ENCODE measurements at regions of chr10 and their contacts with region 1.

Region 1: GRCh38 chr10:93766918-93767317 is 9.2 kb downstream of the LGI1 start:
- DNase-seq: no peak
- ATAC-seq: no peak
- H3K4me3 ChIP-seq: no peak overlapping the region
- H3K4me3 Mint-ChIP-seq: no peak overlapping the region
- H3K27ac ChIP-seq: no peak overlapping the region
- H3K27ac Mint-ChIP-seq: no peak overlapping the region
- H3K4me1 ChIP-seq: no peaks in the 10 kb centered on the region
- H3K4me1 Mint-ChIP-seq: no peaks in the 10 kb centered on the region
- H3K27me3 ChIP-seq: no peaks in the 10 kb centered on the region
- H3K27me3 Mint-ChIP-seq: peaks cover 14 to 24% of the 10 kb centered on the region in 2 donors
- CTCF ChIP-seq: no peak

Region 2: DNA sequence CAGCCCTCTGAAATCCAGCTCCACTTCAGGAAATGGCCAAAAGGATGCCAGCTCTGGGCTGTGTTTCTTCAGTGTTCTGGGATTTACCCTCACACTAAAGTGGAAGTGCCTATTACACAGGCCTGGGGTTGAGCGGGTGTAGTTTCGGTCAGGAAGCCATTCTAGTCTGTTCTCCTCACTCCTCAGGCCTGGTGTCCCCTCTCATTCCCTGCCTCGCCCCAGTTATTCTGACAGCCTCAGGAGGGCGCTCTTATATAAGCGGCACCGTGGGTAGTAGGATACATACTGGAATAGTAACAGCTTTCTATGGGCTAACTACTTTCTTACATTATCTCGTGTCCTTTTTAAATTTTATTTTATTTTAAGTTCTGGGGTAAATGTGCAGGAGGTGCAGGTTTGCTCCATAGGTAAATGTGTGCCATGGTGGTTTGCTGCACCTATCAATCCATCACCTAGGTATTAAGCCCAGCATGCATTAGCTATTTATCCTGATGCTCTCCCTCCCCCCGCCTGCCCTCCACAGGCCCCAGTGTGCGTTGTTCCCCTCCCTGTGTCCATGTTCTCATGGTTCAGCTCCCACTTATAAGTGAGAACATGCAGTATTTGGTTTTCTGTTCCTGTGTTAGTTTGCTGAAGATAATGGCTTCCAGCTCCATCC is 21.4 kb before region 1 on chr10:
- intact Hi-C with region 1: loop called (anchors 1 kb)
- DNase-seq: no peak
- ATAC-seq: no peak
- H3K4me3 ChIP-seq: no peak overlapping the region
- H3K4me3 Mint-ChIP-seq: no peak overlapping the region
- H3K27ac ChIP-seq: no peak overlapping the region
- H3K27ac Mint-ChIP-seq: no peak overlapping the region
- H3K4me1 ChIP-seq: no peaks in the 10 kb centered on the region
- H3K4me1 Mint-ChIP-seq: no peaks in the 10 kb centered on the region
- H3K27me3 ChIP-seq: no peaks in the 10 kb centered on the region
- H3K27me3 Mint-ChIP-seq: peaks cover 5 to 9% of the 10 kb centered on the region in 2 donors
- CTCF ChIP-seq: no peak